ENCODE measurements at regions of chr1 and their contacts with region 1.

Region 1: DNA sequence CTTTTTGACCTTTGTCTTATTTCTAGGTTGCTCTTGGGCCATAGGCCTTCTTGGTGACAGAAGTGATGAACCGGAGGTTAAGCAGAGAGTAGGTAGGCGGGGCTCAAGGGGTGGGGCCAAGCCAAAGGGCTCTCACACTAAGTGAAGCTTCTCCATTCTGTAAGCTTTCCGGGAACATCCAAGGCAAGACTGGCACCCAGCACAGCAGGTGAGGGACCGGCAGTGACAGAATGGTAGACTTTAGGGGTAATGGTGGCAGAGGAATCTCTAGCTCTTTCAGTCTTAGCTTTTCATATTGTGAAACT is at the start of gene TNFAIP8L2:
- DNase-seq: peak in 2 of 10 donors; percentile 67 to 88

Region 2: DNA sequence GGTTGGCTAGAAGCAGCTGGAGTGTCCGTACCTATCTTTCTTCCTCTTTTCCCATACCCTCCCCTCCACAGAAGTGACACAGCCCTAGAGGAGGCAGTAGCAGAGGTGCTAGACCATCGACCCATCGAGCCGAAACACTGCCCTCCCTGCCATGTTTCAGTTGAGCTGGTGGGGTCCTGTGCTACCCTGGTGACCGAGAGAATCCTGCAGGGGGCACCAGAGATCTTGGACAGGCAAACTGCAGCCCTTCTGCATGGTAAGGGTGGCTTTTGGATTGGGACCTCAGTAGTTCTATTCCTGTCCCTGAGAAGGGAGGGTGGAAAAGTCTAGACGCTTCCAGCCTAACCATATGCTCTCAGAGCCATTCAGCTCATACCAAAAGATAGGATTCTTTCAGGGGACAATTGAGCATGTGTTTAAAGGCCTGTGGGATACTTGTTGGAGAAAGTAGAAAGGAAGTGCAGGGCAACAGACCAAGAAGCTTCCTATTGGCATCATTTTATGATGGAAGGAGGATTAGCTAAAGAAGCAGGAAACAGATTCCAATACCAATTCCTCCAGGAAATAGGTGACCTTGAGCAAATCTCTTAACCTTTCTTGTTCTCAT is 131.8 kb before region 1 on chr1:
- intact Hi-C with region 1: loop called (anchors 5 kb)
- DNase-seq: peak; percentile 36 to 95 (median 79)

Region 3: DNA sequence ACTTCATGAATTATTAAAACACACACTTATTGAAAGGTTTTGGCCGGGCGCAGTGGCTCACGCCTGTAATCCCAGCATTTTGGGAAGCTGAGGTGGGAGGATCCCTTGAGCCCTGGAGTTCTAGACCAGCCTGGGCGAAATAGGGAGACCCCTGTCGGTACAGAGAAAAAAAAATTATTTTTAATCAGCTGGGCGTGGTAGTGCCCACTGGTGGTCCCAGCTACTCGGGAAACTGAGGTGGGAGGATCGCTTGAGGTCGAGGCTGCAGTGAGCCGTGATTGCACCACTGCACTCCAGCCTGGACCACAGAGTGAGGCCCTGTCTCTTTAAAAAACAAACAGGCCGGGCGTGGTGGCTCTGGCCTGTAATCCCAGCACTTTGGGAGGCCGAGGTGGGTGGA is 84.2 kb before region 1 on chr1:
- intact Hi-C with region 1: no loop called
- DNase-seq: no peak

Region 4: DNA sequence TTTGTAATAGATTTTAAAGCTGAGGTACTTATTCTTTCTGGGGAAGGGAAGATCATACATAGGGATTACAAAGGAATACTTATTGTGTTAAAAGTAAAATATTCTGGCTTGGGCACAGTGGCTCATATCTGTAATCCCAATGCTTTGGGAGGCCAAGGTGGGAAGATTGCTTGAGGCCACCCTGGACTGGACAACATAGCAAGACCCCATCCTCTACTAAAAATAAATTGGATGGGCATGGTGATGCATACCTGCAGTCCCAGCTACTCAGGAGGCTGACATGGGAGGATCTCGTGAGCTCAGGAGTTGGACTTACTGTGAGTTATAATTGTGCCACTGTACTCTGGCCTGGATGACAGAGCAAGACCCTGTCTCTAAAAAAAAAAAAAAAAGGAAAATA is 58.3 kb before region 1 on chr1:
- intact Hi-C with region 1: loop called (anchors 2 kb)
- DNase-seq: peak in 1 of 10 donors; percentile 4